GM12878 (cell line): ENCODE measurements at regions of chr11 and their contacts with region 1.

Region 1: GRCh38 chr11:116787786-116788486 is at the start of gene ZPR1:
- DNase-seq: no peak
- ATAC-seq: peak; percentile 86
- H3K4me3 ChIP-seq: peak within 1 kb of the TSS; percentile 96
- H3K27ac ChIP-seq: peak within 1 kb of the TSS; percentile 72
- H3K4me1 ChIP-seq: peaks cover 18% of the 10 kb centered on the region
- H3K27me3 ChIP-seq: no peaks in the 10 kb centered on the region
- CTCF ChIP-seq: no peak
- EP300 ChIP-seq: no peak
- POLR2A ChIP-seq: peak; percentile 96
- RAD21 ChIP-seq: no peak
- polyA plus RNA-seq, gene ZPR1: 9.3 to 20.4 TPM

Region 2: DNA sequence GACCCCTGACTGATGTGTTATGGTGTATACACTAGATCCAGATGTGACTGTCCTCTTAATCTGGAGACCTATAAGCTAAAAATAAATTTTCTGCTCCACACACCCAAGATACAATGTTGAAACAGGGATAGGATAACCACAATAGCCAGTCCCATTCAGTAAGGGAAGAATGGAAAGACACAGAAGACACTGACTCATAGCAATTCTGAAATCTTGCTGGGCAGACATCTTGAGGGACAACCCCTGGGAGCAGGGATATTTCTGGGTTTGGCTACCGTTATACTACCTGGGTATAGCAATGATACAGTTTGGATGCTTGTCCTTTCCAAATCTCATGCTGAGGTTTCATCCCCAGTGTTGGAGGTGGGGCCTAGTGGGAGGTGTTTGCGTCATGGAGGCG is 109.0 kb before region 1 on chr11:
- CTCF ChIA-PET with region 1: no interaction called
- POLR2A ChIA-PET with region 1: no interaction called
- RAD21 ChIA-PET with region 1: no interaction called
- SMC1A ChIA-PET with region 1: no interaction called
- in situ Hi-C with region 1: no loop called
- intact Hi-C with region 1: no loop called
- DNase-seq: no peak
- ATAC-seq: no peak
- H3K4me3 ChIP-seq: no peak overlapping the region
- H3K27ac ChIP-seq: no peak overlapping the region
- H3K4me1 ChIP-seq: no peaks in the 10 kb centered on the region
- H3K27me3 ChIP-seq: no peaks in the 10 kb centered on the region
- CTCF ChIP-seq: no peak
- EP300 ChIP-seq: no peak
- POLR2A ChIP-seq: no peak
- RAD21 ChIP-seq: no peak

Region 3: GRCh38 chr11:116772443-116773202 is 15.3 kb before region 1 on chr11 and contains the start of gene BUD13:
- CTCF ChIA-PET with region 1: interaction called, 10 read pairs
- POLR2A ChIA-PET with region 1: interaction called, 28 read pairs
- RAD21 ChIA-PET with region 1: interaction called, 7 read pairs
- SMC1A ChIA-PET with region 1: interaction called, 14 read pairs
- in situ Hi-C with region 1: no loop called
- intact Hi-C with region 1: no loop called
- DNase-seq: peak; percentile 60
- ATAC-seq: peak; percentile 92
- H3K4me3 ChIP-seq: peak within 1 kb of the TSS; percentile 82
- H3K27ac ChIP-seq: peak within 1 kb of the TSS; percentile 80
- H3K4me1 ChIP-seq: peaks cover 3% of the 10 kb centered on the region; the same call in 1 of the 2 replicates
- H3K27me3 ChIP-seq: no peaks in the 10 kb centered on the region
- CTCF ChIP-seq: no peak; a peak in 1 of 6 replicates
- EP300 ChIP-seq: no peak
- POLR2A ChIP-seq: peak; percentile 92
- RAD21 ChIP-seq: no peak
- polyA plus RNA-seq, gene BUD13: 10.9 to 15.8 TPM

Region 4: DNA sequence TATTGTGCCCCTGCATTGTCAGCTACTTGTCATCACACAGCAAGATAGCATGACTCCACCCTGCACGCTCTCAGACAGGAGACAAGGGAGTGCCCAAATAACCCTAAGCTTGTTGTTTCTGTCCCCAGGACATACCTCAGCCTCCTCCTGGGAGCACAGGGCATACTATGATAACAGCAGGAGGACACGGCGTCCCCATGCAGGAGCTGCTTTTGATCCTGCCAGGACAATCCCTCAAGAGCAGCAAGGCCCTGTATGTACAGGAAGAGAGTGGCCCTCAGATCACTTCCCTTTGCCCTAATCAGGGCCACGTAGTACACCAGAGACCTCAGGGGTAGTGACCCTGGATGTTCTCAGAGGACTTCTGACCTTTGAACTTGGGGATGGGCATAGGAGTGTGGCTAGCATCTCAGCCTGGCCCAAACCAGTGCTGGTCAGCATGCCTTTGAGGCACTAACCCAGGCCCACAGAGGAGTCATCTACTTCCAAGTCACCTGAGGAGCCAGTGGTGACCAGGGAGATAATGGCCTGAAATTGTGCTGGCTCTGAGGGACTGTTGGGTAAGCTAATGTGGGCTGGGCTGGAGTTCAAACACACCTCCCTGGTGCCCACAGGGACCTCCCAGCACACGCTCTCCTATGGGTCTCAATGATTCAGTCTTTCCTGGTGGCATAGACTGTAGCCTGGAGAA is 26.0 kb after region 1 on chr11:
- CTCF ChIA-PET with region 1: interaction called, 12 read pairs
- POLR2A ChIA-PET with region 1: no interaction called
- RAD21 ChIA-PET with region 1: interaction called, 3 read pairs
- SMC1A ChIA-PET with region 1: interaction called, 4 read pairs
- in situ Hi-C with region 1: no loop called
- intact Hi-C with region 1: no loop called
- DNase-seq: no peak
- ATAC-seq: no peak
- H3K4me3 ChIP-seq: no peak overlapping the region
- H3K27ac ChIP-seq: no peak overlapping the region
- H3K4me1 ChIP-seq: no peaks in the 10 kb centered on the region
- H3K27me3 ChIP-seq: no peaks in the 10 kb centered on the region
- CTCF ChIP-seq: no peak
- EP300 ChIP-seq: no peak
- POLR2A ChIP-seq: no peak
- RAD21 ChIP-seq: no peak

Region 5: GRCh38 chr11:116853461-116854073 is 65.6 kb after region 1 on chr11:
- CTCF ChIA-PET with region 1: interaction called, 11 read pairs
- POLR2A ChIA-PET with region 1: interaction called, 3 read pairs
- RAD21 ChIA-PET with region 1: interaction called, 7 read pairs
- SMC1A ChIA-PET with region 1: interaction called, 10 read pairs
- in situ Hi-C with region 1: no loop called
- intact Hi-C with region 1: no loop called
- DNase-seq: peak; percentile 90
- ATAC-seq: peak; percentile 98
- H3K4me3 ChIP-seq: peak overlapping the region; percentile 31; the same call in 1 of the 2 replicates
- H3K27ac ChIP-seq: peak overlapping the region; percentile 83
- H3K4me1 ChIP-seq: peaks cover 30% of the 10 kb centered on the region
- H3K27me3 ChIP-seq: no peaks in the 10 kb centered on the region
- CTCF ChIP-seq: no peak
- EP300 ChIP-seq: peak; percentile 79 to 84
- POLR2A ChIP-seq: no peak
- RAD21 ChIP-seq: no peak

Region 6: DNA sequence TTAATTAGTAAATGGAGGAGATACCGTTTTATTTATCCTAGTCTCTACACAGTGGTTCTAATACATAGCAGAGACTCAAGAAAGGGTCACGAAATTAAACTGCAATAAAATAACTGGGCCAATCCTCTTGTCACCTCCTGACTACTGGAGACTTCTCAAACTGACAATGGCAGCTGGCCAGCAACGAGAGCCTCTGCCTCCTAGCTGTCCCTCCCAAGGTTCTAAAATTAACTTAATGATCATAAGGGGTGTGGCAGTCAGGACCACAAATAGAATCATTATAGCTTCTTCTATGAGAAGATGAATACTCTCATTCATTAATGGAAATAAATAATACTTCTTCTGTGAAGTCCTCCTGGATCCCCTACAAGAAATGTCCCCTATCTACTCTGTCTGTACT is 113.3 kb after region 1 on chr11:
- CTCF ChIA-PET with region 1: no interaction called
- POLR2A ChIA-PET with region 1: no interaction called
- RAD21 ChIA-PET with region 1: no interaction called
- SMC1A ChIA-PET with region 1: no interaction called
- in situ Hi-C with region 1: no loop called
- intact Hi-C with region 1: no loop called
- DNase-seq: no peak
- ATAC-seq: no peak
- H3K4me3 ChIP-seq: no peak overlapping the region
- H3K27ac ChIP-seq: no peak overlapping the region
- H3K4me1 ChIP-seq: no peaks in the 10 kb centered on the region
- H3K27me3 ChIP-seq: no peaks in the 10 kb centered on the region
- CTCF ChIP-seq: no peak
- EP300 ChIP-seq: no peak
- POLR2A ChIP-seq: no peak
- RAD21 ChIP-seq: no peak

Region 7: GRCh38 chr11:116980136-116980793 is 192.3 kb after region 1 on chr11:
- CTCF ChIA-PET with region 1: interaction called, 3 read pairs
- POLR2A ChIA-PET with region 1: interaction called, 13 read pairs
- RAD21 ChIA-PET with region 1: no interaction called
- SMC1A ChIA-PET with region 1: no interaction called
- in situ Hi-C with region 1: no loop called
- intact Hi-C with region 1: no loop called
- DNase-seq: peak; percentile 71
- ATAC-seq: peak; percentile 98
- H3K4me3 ChIP-seq: peak overlapping the region; percentile 51; the same call in 1 of the 2 replicates
- H3K27ac ChIP-seq: peak overlapping the region; percentile 73
- H3K4me1 ChIP-seq: peaks cover 29% of the 10 kb centered on the region
- H3K27me3 ChIP-seq: no peaks in the 10 kb centered on the region
- CTCF ChIP-seq: no peak
- EP300 ChIP-seq: no peak; a peak in 1 of 4 replicates
- POLR2A ChIP-seq: no peak
- RAD21 ChIP-seq: no peak